ENCODE measurements at regions of chr2 and their contacts with region 1.

Region 1: DNA sequence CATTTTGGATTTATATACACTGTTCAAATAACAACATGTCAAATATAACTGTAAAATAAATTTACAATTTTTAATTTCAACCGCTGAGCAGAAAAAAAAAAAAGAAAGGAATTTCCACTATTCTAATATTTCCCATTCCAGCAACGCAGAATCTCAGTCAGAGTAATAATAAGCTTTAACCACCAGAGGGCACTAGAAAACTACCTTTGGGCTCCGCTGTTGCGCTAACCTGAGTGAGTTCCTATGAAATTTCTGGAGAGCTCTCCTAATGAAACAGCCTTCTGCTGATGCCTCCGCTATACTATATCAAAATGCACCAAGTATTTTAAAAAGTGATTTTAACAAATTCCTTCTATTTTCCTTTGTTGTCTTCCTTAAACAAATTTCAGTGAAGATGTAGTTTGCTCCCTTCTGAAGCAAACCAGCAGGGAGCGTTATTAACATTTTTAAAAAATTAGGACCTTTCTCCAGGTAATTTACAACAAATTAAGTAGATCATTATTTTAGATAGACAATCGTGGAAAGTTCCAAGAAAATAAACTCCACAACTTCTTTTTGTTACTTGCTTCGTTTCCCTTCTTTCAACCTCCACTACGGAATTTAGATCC is 23.0 kb downstream of the ERMN start:
- DNase-seq: peak in 23 of 35 experiments; percentile 1 to 74 (median 11)
- ATAC-seq: peak; percentile 68 to 80 (median 74)
- H3K4me3 ChIP-seq: no peak overlapping the region
- H3K4me3 Mint-ChIP-seq: no peak overlapping the region
- H3K27ac ChIP-seq: no peak overlapping the region
- H3K27ac Mint-ChIP-seq: no peak overlapping the region
- H3K4me1 ChIP-seq: peaks cover 0 to 7% of the 10 kb centered on the region in 2 experiments
- H3K4me1 Mint-ChIP-seq: peaks cover 11 to 18% (median 14%) of the 10 kb centered on the region in 3 donors
- H3K27me3 ChIP-seq: peaks cover 0 to 3% of the 10 kb centered on the region in 2 experiments
- H3K27me3 Mint-ChIP-seq: peaks cover 0 to 3% of the 10 kb centered on the region in 2 donors

Region 2: DNA sequence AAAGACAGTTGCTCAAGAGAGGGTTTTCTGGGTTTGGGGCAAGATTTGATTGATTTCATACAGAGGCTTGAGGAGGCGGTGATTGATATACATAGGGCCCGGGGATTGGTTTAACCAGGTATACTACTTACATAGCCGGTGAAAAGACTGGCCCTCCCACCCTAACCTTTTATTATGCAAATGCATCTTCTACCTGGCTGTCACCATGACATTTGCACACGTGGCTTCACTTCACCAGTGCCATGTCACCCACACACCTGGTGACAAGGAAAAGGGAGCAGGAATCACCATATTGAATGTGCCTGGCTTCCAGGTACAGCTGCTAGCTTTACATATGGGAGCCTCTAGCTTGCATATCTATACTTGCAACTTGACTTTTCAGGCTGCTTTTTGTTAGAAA is 13.3 kb after region 1 on chr2:
- CTCF ChIA-PET with region 1: interaction called, 8 to 11 read pairs
- POLR2A ChIA-PET with region 1: interaction called in 1 of 2 experiments, 5 read pairs
- DNase-seq: no peak
- ATAC-seq: no peak
- H3K4me3 ChIP-seq: no peak overlapping the region
- H3K4me3 Mint-ChIP-seq: no peak overlapping the region
- H3K27ac ChIP-seq: no peak overlapping the region
- H3K27ac Mint-ChIP-seq: no peak overlapping the region
- H3K4me1 ChIP-seq: no peaks in the 10 kb centered on the region
- H3K4me1 Mint-ChIP-seq: no peaks in the 10 kb centered on the region
- H3K27me3 ChIP-seq: no peaks in the 10 kb centered on the region
- H3K27me3 Mint-ChIP-seq: peaks cover 0 to 2% of the 10 kb centered on the region in 2 donors

Region 3: GRCh38 chr2:157336137-157337010 is 33.8 kb after region 1 on chr2:
- CTCF ChIA-PET with region 1: interaction called, 5 to 25 read pairs
- POLR2A ChIA-PET with region 1: no interaction called
- DNase-seq: peak in 24 of 35 experiments; percentile 1 to 75 (median 32)
- ATAC-seq: no peak
- H3K4me3 ChIP-seq: no peak overlapping the region
- H3K4me3 Mint-ChIP-seq: peak overlapping the region; percentile 50 to 67 (median 60)
- H3K27ac ChIP-seq: no peak overlapping the region
- H3K27ac Mint-ChIP-seq: peak overlapping the region; percentile 78 to 88
- H3K4me1 ChIP-seq: peaks cover 16 to 17% of the 10 kb centered on the region in 2 experiments
- H3K4me1 Mint-ChIP-seq: peaks cover 78 to 89% (median 79%) of the 10 kb centered on the region in 3 donors
- H3K27me3 ChIP-seq: no peaks in the 10 kb centered on the region
- H3K27me3 Mint-ChIP-seq: no peaks in the 10 kb centered on the region

Region 4: GRCh38 chr2:157596992-157597681 is 294.5 kb after region 1 on chr2:
- CTCF ChIA-PET with region 1: interaction called, 28 to 33 read pairs
- POLR2A ChIA-PET with region 1: no interaction called
- DNase-seq: peak in 34 of 35 experiments; percentile 5 to 65 (median 42)
- ATAC-seq: peak; percentile 72 to 84 (median 75)
- H3K4me3 ChIP-seq: peak overlapping the region; percentile 36 to 60
- H3K4me3 Mint-ChIP-seq: peak overlapping the region; percentile 59 to 63 (median 63)
- H3K27ac ChIP-seq: no peak overlapping the region
- H3K27ac Mint-ChIP-seq: no peak overlapping the region
- H3K4me1 ChIP-seq: peaks cover 0 to 6% of the 10 kb centered on the region in 2 experiments
- H3K4me1 Mint-ChIP-seq: peaks cover 12 to 17% (median 15%) of the 10 kb centered on the region in 3 donors
- H3K27me3 ChIP-seq: peaks cover 0 to 16% of the 10 kb centered on the region in 2 experiments
- H3K27me3 Mint-ChIP-seq: peaks cover 5 to 9% of the 10 kb centered on the region in 2 donors

Region 5: GRCh38 chr2:157751462-157752058 is 449.0 kb after region 1 on chr2:
- CTCF ChIA-PET with region 1: interaction called, 8 to 10 read pairs
- POLR2A ChIA-PET with region 1: no interaction called
- DNase-seq: peak in 16 of 35 experiments; percentile 2 to 40 (median 12)
- ATAC-seq: no peak
- H3K4me3 ChIP-seq: no peak overlapping the region
- H3K4me3 Mint-ChIP-seq: no peak overlapping the region
- H3K27ac ChIP-seq: no peak overlapping the region
- H3K27ac Mint-ChIP-seq: no peak overlapping the region
- H3K4me1 ChIP-seq: no peaks in the 10 kb centered on the region
- H3K4me1 Mint-ChIP-seq: peaks cover 2 to 19% (median 3%) of the 10 kb centered on the region in 3 donors
- H3K27me3 ChIP-seq: no peaks in the 10 kb centered on the region
- H3K27me3 Mint-ChIP-seq: no peaks in the 10 kb centered on the region

Region 6: DNA sequence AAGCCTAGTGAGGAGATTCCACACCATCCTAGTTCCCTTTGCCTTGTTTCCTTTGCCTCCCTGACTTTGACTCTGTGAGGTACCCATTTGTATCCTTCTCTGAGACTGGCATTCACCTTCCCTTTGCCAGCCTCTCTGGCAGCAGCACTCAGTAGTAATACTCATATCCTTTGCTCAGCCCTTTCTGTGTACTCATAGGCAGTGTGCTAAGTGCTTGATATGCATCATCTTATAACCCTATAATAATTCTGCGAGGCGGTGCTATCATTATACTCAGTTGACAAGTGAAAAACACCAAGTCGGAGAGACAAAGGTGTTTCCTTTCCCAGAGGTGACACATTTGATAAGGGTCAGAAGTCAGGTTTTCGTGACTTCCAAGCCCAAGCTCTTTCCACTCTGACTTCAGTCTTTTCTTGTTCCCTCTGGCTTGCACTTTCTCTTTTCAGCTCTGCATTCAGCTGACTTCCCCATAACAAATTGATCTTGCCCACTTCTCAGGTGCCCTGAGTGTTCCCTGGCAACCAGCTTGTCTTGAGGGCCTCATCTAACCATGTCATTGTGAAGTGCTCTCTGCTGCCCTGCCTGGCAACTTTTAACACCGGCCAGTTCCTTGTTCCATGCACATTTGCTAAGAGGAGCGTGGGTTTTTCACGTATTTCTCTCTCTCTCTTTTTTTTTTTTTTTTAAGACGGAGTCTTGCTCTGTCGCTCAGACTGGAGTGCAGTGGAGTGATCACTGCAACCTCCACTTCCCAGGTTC is 704.5 kb after region 1 on chr2:
- CTCF ChIA-PET with region 1: interaction called, 11 to 13 read pairs
- POLR2A ChIA-PET with region 1: no interaction called
- DNase-seq: peak in 6 of 35 experiments; percentile 3 to 16 (median 6)
- ATAC-seq: peak in 1 of 4 experiments; percentile 64
- H3K4me3 ChIP-seq: no peak overlapping the region
- H3K4me3 Mint-ChIP-seq: no peak overlapping the region
- H3K27ac ChIP-seq: no peak overlapping the region
- H3K27ac Mint-ChIP-seq: no peak overlapping the region
- H3K4me1 ChIP-seq: no peaks in the 10 kb centered on the region
- H3K4me1 Mint-ChIP-seq: peaks cover 0 to 6% (median 4%) of the 10 kb centered on the region in 3 donors
- H3K27me3 ChIP-seq: no peaks in the 10 kb centered on the region
- H3K27me3 Mint-ChIP-seq: peaks cover 0 to 1% of the 10 kb centered on the region in 2 donors

Region 7: GRCh38 chr2:158179660-158180059 is 877.1 kb after region 1 on chr2:
- CTCF ChIA-PET with region 1: no interaction called
- POLR2A ChIA-PET with region 1: no interaction called
- DNase-seq: peak in 1 of 35 experiments; percentile 17
- ATAC-seq: no peak
- H3K4me3 ChIP-seq: no peak overlapping the region
- H3K4me3 Mint-ChIP-seq: no peak overlapping the region
- H3K27ac ChIP-seq: no peak overlapping the region
- H3K27ac Mint-ChIP-seq: no peak overlapping the region
- H3K4me1 ChIP-seq: no peaks in the 10 kb centered on the region
- H3K4me1 Mint-ChIP-seq: no peaks in the 10 kb centered on the region
- H3K27me3 ChIP-seq: peaks cover 0 to 4% of the 10 kb centered on the region in 2 experiments
- H3K27me3 Mint-ChIP-seq: peaks cover 34 to 36% of the 10 kb centered on the region in 2 donors